ENCODE measurements at regions of chr12 and their contacts with region 1.

Region 1: DNA sequence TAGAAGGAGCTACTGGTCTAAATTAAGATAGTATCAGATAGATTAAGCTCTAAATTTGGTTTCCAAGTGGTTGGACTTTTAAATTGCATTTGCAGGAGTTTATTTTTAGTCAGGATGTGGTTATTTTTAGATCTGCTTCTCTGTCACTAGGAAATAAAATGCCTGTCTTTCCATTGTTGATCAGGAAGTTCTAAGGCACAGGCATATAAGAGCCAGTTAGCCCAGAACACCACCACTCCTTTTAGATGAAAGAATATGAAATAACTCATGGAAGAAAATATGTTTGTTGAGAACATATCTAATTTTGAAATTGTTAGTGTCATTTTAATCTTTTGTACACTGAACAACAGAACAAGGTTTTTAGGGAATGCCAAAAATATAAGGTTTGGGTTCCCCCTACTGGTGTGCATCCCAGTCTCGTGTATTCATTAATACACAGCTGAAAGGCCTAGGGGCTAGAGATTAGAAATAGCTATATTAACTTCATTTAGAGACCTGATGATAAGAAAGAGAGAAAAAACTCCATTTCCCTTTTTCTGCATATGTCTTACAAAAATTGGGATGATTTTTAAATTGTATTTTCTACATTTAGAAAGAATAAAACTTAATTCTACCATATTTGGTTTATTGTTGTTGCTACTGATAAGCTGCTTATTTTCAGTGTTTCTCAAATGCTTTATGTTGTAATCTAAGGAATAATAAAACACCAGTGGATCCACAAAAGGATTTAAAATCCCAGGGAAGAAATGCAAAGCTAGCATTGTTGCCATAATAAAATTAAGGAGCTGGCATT is 67.2 kb downstream of the RIC8B start:
- DNase-seq: peak; percentile 33 to 68 (median 48)
- ATAC-seq: peak; percentile 82
- H3K4me3 ChIP-seq: no peak overlapping the region
- H3K27ac ChIP-seq: no peak overlapping the region
- H3K4me1 ChIP-seq: peaks cover 6 to 24% of the 10 kb centered on the region in 2 experiments; a peak in 3 of 5 replicates
- H3K27me3 ChIP-seq: no peaks in the 10 kb centered on the region
- CTCF ChIP-seq: peak; percentile 41 to 87 (median 68); a peak in 5 of 6 replicates
- EP300 ChIP-seq: no peak
- POLR2A ChIP-seq: no peak
- RAD21 ChIP-seq: peak; percentile 78 to 92

Region 2: GRCh38 chr12:106090591-106091411 is 750.9 kb before region 1 on chr12:
- CTCF ChIA-PET with region 1: no interaction called
- POLR2A ChIA-PET with region 1: no interaction called
- in situ Hi-C with region 1: no loop called
- intact Hi-C with region 1: no loop called
- DNase-seq: no peak
- ATAC-seq: no peak
- H3K4me3 ChIP-seq: no peak overlapping the region
- H3K27ac ChIP-seq: no peak overlapping the region
- H3K4me1 ChIP-seq: no peaks in the 10 kb centered on the region
- H3K27me3 ChIP-seq: peaks cover 8 to 52% of the 10 kb centered on the region in 2 experiments; a peak in 4 of 5 replicates
- CTCF ChIP-seq: no peak
- EP300 ChIP-seq: no peak
- POLR2A ChIP-seq: no peak
- RAD21 ChIP-seq: no peak

Region 3: GRCh38 chr12:106223485-106224354 is 618.0 kb before region 1 on chr12:
- CTCF ChIA-PET with region 1: interaction called, 10 read pairs
- POLR2A ChIA-PET with region 1: no interaction called
- in situ Hi-C with region 1: no loop called
- intact Hi-C with region 1: loop called (anchors 1 kb)
- DNase-seq: peak; percentile 73 to 84 (median 83)
- ATAC-seq: peak; percentile 96
- H3K4me3 ChIP-seq: no peak overlapping the region
- H3K27ac ChIP-seq: no peak overlapping the region
- H3K4me1 ChIP-seq: no peaks in the 10 kb centered on the region
- H3K27me3 ChIP-seq: peaks cover 5 to 8% of the 10 kb centered on the region in 2 experiments; a peak in 3 of 5 replicates
- CTCF ChIP-seq: peak; percentile 84 to 93 (median 85)
- EP300 ChIP-seq: no peak
- POLR2A ChIP-seq: no peak
- RAD21 ChIP-seq: peak; percentile 56 to 79

Region 4: DNA sequence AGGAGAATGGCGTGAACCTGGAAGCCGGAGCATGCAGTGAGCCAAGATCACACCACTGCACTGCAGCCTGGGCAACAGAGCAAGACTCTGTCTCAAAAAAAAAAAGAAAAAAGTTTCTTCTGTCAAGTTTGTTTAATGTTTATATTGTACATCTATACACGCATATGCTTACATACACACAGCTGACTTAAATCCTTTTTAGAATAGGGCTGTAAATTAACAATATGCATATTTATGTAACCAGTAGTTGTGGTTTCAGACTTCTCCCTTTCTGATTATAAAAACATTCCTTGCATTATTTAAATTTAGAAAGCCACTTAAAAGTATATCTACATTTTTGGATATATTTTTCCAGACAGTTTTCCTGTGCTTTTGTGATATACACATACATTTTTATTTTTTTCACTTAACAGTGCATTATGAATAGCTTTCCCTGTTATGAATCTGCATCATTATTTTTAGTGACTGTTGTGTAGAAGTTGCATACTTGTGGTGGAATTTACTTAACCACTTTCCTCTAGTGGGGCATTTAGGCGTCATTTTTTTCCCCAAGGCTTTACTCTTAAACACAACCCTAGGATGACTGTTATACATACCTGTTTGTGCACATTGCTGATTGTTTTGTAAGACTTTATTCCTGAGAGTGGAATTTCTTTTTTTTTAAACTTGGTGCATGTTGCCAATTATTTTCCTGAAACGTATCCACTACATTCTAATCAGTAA is 454.7 kb before region 1 on chr12:
- CTCF ChIA-PET with region 1: interaction called, 20 read pairs
- POLR2A ChIA-PET with region 1: no interaction called
- in situ Hi-C with region 1: no loop called
- intact Hi-C with region 1: loop called (anchors 1 kb)
- DNase-seq: no peak
- ATAC-seq: no peak
- H3K4me3 ChIP-seq: no peak overlapping the region
- H3K27ac ChIP-seq: no peak overlapping the region
- H3K4me1 ChIP-seq: no peaks in the 10 kb centered on the region
- H3K27me3 ChIP-seq: no peaks in the 10 kb centered on the region
- CTCF ChIP-seq: no peak
- EP300 ChIP-seq: no peak
- POLR2A ChIP-seq: no peak
- RAD21 ChIP-seq: no peak

Region 5: DNA sequence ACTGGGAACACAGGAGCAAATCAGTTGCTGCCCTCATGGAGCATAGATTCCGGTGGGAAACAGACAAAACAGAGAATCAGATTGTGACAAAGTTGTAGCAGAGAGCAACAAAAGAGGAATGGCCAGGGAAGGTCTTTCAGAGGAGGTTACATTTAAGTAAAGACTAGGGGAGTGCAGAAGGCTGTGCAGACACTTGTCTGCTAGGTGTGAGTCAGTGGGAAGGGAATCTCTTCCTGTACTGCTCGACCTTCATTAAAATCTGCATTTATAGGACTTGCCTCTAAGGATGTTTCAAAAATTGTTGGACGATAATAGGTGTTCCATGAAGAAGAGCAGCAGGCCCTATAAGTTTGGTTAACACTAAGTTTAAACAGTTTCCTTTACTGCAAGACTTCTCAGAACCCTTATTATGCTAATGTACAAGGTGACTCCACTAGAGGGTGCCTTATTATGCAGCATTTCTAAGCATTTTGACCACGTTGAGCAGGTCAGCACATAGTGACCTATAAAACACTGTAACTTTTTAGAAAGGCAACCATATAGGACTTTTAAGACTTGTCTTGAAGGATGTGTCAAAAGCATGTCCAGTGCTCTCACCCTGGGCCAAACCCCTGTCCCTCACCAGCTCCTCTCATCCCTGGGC is 159.0 kb before region 1 on chr12:
- CTCF ChIA-PET with region 1: interaction called, 4 read pairs
- POLR2A ChIA-PET with region 1: no interaction called
- in situ Hi-C with region 1: no loop called
- intact Hi-C with region 1: loop called (anchors 2 kb)
- DNase-seq: peak in 2 of 4 experiments; percentile 20 to 40
- ATAC-seq: peak; percentile 82
- H3K4me3 ChIP-seq: no peak overlapping the region
- H3K27ac ChIP-seq: no peak overlapping the region
- H3K4me1 ChIP-seq: no peaks in the 10 kb centered on the region
- H3K27me3 ChIP-seq: peaks cover 4 to 20% of the 10 kb centered on the region in 2 experiments; a peak in 2 of 5 replicates
- CTCF ChIP-seq: peak; percentile 18 to 47 (median 28); a peak in 2 of 6 replicates
- EP300 ChIP-seq: no peak
- POLR2A ChIP-seq: no peak
- RAD21 ChIP-seq: peak in 1 of 2 experiments; percentile 60; a peak in 3 of 4 replicates

Region 6: GRCh38 chr12:106736051-106736957 is 105.4 kb before region 1 on chr12:
- CTCF ChIA-PET with region 1: no interaction called
- POLR2A ChIA-PET with region 1: no interaction called
- in situ Hi-C with region 1: no loop called
- intact Hi-C with region 1: loop called (anchors 2 kb)
- DNase-seq: peak in 1 of 4 experiments; percentile 29
- ATAC-seq: peak; percentile 73
- H3K4me3 ChIP-seq: no peak overlapping the region
- H3K27ac ChIP-seq: no peak overlapping the region
- H3K4me1 ChIP-seq: peaks cover 0 to 17% of the 10 kb centered on the region in 2 experiments; a peak in 2 of 5 replicates
- H3K27me3 ChIP-seq: peaks cover 7 to 8% of the 10 kb centered on the region in 2 experiments; a peak in 4 of 5 replicates
- CTCF ChIP-seq: peak in 2 of 3 experiments; percentile 31 to 42; a peak in 4 of 6 replicates
- EP300 ChIP-seq: no peak
- POLR2A ChIP-seq: no peak
- RAD21 ChIP-seq: peak; percentile 22 to 40; a peak in 2 of 4 replicates

Region 7: DNA sequence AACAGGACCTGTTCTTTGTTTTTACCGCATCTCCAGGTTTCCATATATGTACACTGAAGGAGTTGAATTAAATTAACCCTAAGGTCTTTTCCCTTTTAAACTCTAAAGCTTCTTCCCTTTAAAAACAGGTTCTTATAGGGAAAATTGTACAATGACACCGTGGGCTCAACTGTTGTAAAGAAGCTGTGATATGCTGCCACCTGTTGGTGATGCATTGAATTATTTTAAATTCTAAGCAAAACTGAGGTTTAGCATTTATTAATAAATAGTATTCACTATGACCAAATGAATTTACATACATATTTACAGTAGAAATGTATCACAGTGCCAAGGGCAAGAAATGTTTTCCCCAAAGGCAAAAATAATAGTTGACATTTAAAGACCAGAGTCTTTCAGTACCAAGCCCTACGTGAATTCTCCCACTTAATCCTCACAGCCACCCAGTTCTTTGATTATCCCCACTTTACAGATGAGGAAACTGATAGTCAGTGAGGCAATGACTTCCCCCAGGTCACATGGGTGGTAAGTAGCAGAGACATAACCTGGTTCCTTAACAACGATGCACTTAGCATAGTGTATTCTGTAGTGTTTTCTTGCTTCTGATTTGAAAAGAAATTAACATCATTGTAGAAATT is 78.3 kb after region 1 on chr12:
- CTCF ChIA-PET with region 1: interaction called, 4 read pairs
- POLR2A ChIA-PET with region 1: no interaction called
- in situ Hi-C with region 1: no loop called
- intact Hi-C with region 1: loop called (anchors 5 kb)
- DNase-seq: peak; percentile 52 to 61 (median 58)
- ATAC-seq: peak; percentile 69
- H3K4me3 ChIP-seq: no peak overlapping the region
- H3K27ac ChIP-seq: no peak overlapping the region
- H3K4me1 ChIP-seq: no peaks in the 10 kb centered on the region
- H3K27me3 ChIP-seq: peaks cover 7 to 11% of the 10 kb centered on the region in 2 experiments; a peak in 3 of 5 replicates
- CTCF ChIP-seq: peak; percentile 47 to 74 (median 64); a peak in 5 of 6 replicates
- EP300 ChIP-seq: no peak
- POLR2A ChIP-seq: no peak
- RAD21 ChIP-seq: peak; percentile 66 to 84

Measured in K562 (cell line).